ENCODE measurements at regions of chr2 and their contacts with region 1.

Region 1: GRCh38 chr2:225660262-225661131 is 261.0 kb downstream of the NYAP2 start:
- DNase-seq: peak; percentile 37 to 71 (median 60)
- ATAC-seq: peak; percentile 83
- H3K4me3 ChIP-seq: no peak overlapping the region
- H3K4me3 Mint-ChIP-seq: no peak overlapping the region
- H3K27ac ChIP-seq: no peak overlapping the region
- H3K27ac Mint-ChIP-seq: no peak overlapping the region
- H3K4me1 ChIP-seq: no peaks in the 10 kb centered on the region
- H3K4me1 Mint-ChIP-seq: no peaks in the 10 kb centered on the region
- H3K27me3 ChIP-seq: peaks cover 0 to 2% of the 10 kb centered on the region in 2 donors
- H3K27me3 Mint-ChIP-seq: peaks cover 15 to 23% (median 20%) of the 10 kb centered on the region in 5 donors

Region 2: GRCh38 chr2:224357098-224357901 is 1303.2 kb before region 1 on chr2:
- CTCF ChIA-PET with region 1: interaction called, 3 read pairs
- POLR2A ChIA-PET with region 1: no interaction called
- intact Hi-C with region 1: loop called in 1 of 2 experiments (anchors 1 kb)
- DNase-seq: peak; percentile 19 to 68 (median 59)
- ATAC-seq: peak; percentile 82
- H3K4me3 ChIP-seq: no peak overlapping the region
- H3K4me3 Mint-ChIP-seq: no peak overlapping the region
- H3K27ac ChIP-seq: no peak overlapping the region
- H3K27ac Mint-ChIP-seq: no peak overlapping the region
- H3K4me1 ChIP-seq: no peaks in the 10 kb centered on the region
- H3K4me1 Mint-ChIP-seq: peaks cover 0 to 2% (median 0%) of the 10 kb centered on the region in 7 donors
- H3K27me3 ChIP-seq: no peaks in the 10 kb centered on the region
- H3K27me3 Mint-ChIP-seq: peaks cover 8 to 20% (median 9%) of the 10 kb centered on the region in 5 donors

Region 3: GRCh38 chr2:224802407-224802806 is 858.1 kb before region 1 on chr2:
- CTCF ChIA-PET with region 1: no interaction called
- POLR2A ChIA-PET with region 1: no interaction called
- intact Hi-C with region 1: loop called in 1 of 2 experiments (anchors 5 kb)
- DNase-seq: no peak
- ATAC-seq: no peak
- H3K4me3 ChIP-seq: no peak overlapping the region
- H3K4me3 Mint-ChIP-seq: no peak overlapping the region
- H3K27ac ChIP-seq: no peak overlapping the region
- H3K27ac Mint-ChIP-seq: peak overlapping the region in 4 of 9 donors; percentile 12 to 79 (median 26)
- H3K4me1 ChIP-seq: no peaks in the 10 kb centered on the region
- H3K4me1 Mint-ChIP-seq: peaks cover 0 to 4% (median 0%) of the 10 kb centered on the region in 7 donors
- H3K27me3 ChIP-seq: no peaks in the 10 kb centered on the region
- H3K27me3 Mint-ChIP-seq: no peaks in the 10 kb centered on the region

Region 4: DNA sequence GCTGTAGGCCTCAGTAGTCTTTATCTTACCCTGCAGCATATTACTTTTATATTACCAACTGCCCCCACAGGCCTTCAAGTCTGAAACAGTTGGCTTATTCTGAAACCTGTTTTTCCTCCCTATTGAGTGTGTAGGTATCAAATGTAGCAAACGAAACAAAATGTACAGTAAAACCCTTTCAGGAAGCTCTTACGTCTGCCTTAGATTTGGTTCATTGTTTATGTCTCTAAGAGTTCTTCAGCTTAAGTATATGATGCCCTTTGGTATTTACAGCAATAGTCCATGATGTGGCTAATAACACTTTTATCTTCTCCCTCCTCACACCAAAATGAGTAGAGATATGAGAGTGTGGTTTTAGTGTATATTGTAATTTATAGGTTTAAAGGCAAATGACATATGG is 727.1 kb before region 1 on chr2:
- CTCF ChIA-PET with region 1: interaction called, 3 read pairs
- POLR2A ChIA-PET with region 1: no interaction called
- intact Hi-C with region 1: loop called in 1 of 2 experiments (anchors 1 kb)
- DNase-seq: no peak
- ATAC-seq: peak; percentile 36
- H3K4me3 ChIP-seq: no peak overlapping the region
- H3K4me3 Mint-ChIP-seq: peak overlapping the region; percentile 17 to 85 (median 65)
- H3K27ac ChIP-seq: peak overlapping the region; percentile 32
- H3K27ac Mint-ChIP-seq: peak overlapping the region; percentile 75 to 99 (median 87)
- H3K4me1 ChIP-seq: peaks cover 62 to 70% of the 10 kb centered on the region in 2 donors
- H3K4me1 Mint-ChIP-seq: peaks cover 78 to 100% (median 95%) of the 10 kb centered on the region in 7 donors
- H3K27me3 ChIP-seq: no peaks in the 10 kb centered on the region
- H3K27me3 Mint-ChIP-seq: no peaks in the 10 kb centered on the region

Region 5: GRCh38 chr2:225282858-225283710 is 377.4 kb before region 1 on chr2:
- CTCF ChIA-PET with region 1: interaction called, 3 read pairs
- POLR2A ChIA-PET with region 1: no interaction called
- intact Hi-C with region 1: loop called in 1 of 2 experiments (anchors 1 kb)
- DNase-seq: peak in 5 of 9 donors; percentile 11 to 29 (median 20)
- ATAC-seq: peak; percentile 48
- H3K4me3 ChIP-seq: no peak overlapping the region
- H3K4me3 Mint-ChIP-seq: no peak overlapping the region
- H3K27ac ChIP-seq: no peak overlapping the region
- H3K27ac Mint-ChIP-seq: no peak overlapping the region
- H3K4me1 ChIP-seq: no peaks in the 10 kb centered on the region
- H3K4me1 Mint-ChIP-seq: peaks cover 0 to 8% (median 0%) of the 10 kb centered on the region in 7 donors
- H3K27me3 ChIP-seq: no peaks in the 10 kb centered on the region
- H3K27me3 Mint-ChIP-seq: peaks cover 0 to 2% (median 0%) of the 10 kb centered on the region in 5 donors